ENCODE measurements at regions of chr4 and their contacts with region 1.

Region 1: GRCh38 chr4:99816545-99817308 is at the start of gene DAPP1:
- DNase-seq: no peak
- ATAC-seq: no peak
- H3K4me3 ChIP-seq: no peak within 1 kb of the TSS
- H3K27ac ChIP-seq: no peak within 1 kb of the TSS
- H3K4me1 ChIP-seq: no peaks in the 10 kb centered on the region
- H3K27me3 ChIP-seq: peaks cover 2% of the 10 kb centered on the region
- CTCF ChIP-seq: no peak
- POLR2A ChIP-seq: no peak
- RAD21 ChIP-seq: no peak
- total RNA-seq, gene DAPP1: not detected in 2 replicates

Region 2: GRCh38 chr4:100060765-100061416 is 244.2 kb after region 1 on chr4:
- CTCF ChIA-PET with region 1: no interaction called
- POLR2A ChIA-PET with region 1: no interaction called
- dilution Hi-C with region 1: no loop called
- in situ Hi-C with region 1: no loop called
- intact Hi-C with region 1: loop called (anchors 10 kb)
- DNase-seq: no peak
- ATAC-seq: no peak
- H3K4me3 ChIP-seq: no peak overlapping the region
- H3K27ac ChIP-seq: no peak overlapping the region
- H3K4me1 ChIP-seq: peaks cover 5% of the 10 kb centered on the region
- H3K27me3 ChIP-seq: no peaks in the 10 kb centered on the region
- CTCF ChIP-seq: no peak
- POLR2A ChIP-seq: no peak
- RAD21 ChIP-seq: no peak